GM10248 (cell line): ENCODE measurements at regions of chr5 and their contacts with region 1.

Region 1: GRCh38 chr5:154467655-154468354 is 10.2 kb downstream of the HAND1 start:
- DNase-seq: peak; percentile 86
- CTCF ChIP-seq: peak; percentile 89

Region 2: GRCh38 chr5:153974131-153974812 is 493.5 kb before region 1 on chr5:
- CTCF ChIA-PET with region 1: interaction called, 12 read pairs
- POLR2A ChIA-PET with region 1: no interaction called
- DNase-seq: peak; percentile 66
- CTCF ChIP-seq: peak; percentile 79

Region 3: GRCh38 chr5:154487541-154487940 is 19.7 kb after region 1 on chr5:
- CTCF ChIA-PET with region 1: interaction called, 36 read pairs
- POLR2A ChIA-PET with region 1: no interaction called
- DNase-seq: peak; percentile 84
- CTCF ChIP-seq: no peak

Region 4: DNA sequence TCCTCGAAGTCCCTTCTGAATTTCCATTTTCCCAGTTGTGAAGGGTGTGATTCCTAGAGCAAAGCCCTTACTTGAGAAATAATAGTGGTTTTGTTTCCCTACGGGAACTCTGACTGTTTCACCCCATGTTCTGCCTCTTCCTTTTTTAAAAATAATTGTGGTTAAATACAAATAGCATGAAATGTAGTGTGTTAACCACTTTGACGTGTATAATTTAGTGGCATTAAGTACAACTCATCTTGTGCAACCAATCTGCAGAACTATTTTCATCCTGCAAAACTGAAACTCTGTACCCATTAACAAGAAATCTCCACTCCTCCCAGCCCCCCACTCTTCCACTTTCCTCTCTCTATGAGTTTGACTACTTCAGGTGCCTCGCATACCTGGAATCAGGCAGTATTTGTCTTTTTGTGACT is 45.9 kb after region 1 on chr5:
- CTCF ChIA-PET with region 1: interaction called, 14 read pairs
- POLR2A ChIA-PET with region 1: no interaction called
- DNase-seq: no peak
- CTCF ChIP-seq: no peak

Region 5: DNA sequence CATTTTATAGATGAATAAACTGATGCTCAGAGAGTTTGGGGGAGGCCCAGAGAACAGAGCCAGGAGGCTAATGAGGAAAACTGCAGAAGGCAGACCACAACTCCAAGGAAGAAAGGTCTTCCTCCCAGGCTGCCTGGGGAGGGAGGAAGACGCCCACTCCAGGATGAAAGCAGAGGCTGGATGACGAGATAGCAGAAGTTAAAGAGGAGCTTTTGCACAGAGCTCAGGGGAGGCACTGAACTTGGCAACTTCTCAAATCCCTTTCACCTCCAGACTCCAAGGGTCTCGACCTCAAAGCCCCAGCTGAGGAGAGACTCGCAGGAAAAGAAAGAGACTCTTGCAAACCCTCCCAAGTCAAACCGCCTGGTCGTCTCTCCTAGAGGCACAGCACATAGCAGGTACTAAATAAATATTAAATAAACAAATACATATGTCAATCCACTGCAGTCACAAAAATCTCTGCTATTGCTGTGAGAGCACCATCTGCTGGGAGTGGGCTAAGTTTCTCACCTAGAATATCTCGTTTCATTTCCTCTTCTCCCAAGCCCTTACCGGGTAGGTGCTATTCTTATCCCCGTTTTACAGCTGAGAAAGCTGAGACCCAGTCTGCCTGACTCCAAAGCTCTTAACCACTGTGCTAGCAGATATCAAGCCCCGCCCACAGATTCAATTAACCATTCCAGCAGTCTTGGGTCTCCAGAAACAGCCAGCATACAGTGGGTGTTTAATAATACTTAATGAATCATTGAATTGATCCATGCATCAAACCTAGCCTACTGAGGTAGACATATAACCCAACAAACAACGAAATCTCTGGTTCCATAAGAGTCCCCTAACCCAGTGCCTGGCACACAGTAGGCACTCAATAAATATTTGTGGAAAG is 108.0 kb after region 1 on chr5:
- CTCF ChIA-PET with region 1: interaction called, 16 read pairs
- POLR2A ChIA-PET with region 1: no interaction called
- DNase-seq: peak; percentile 76
- CTCF ChIP-seq: peak; percentile 25